ENCODE measurements at regions of chr9 and their contacts with region 1.

Region 1: GRCh38 chr9:84397151-84397728 is 56.7 kb upstream of the SLC28A3 start:
- DNase-seq: peak; percentile 49 to 67
- ATAC-seq: peak; percentile 86 to 94
- H3K4me3 ChIP-seq: no peak overlapping the region
- H3K27ac ChIP-seq: no peak overlapping the region
- H3K4me1 ChIP-seq: no peaks in the 10 kb centered on the region
- CTCF ChIP-seq: peak; percentile 86
- EP300 ChIP-seq: no peak
- POLR2A ChIP-seq: no peak
- RAD21 ChIP-seq: peak; percentile 90 to 92

Region 2: GRCh38 chr9:84424931-84425330 is 27.7 kb after region 1 on chr9:
- CTCF ChIA-PET with region 1: interaction called, 10 read pairs
- POLR2A ChIA-PET with region 1: no interaction called
- DNase-seq: no peak
- ATAC-seq: no peak
- H3K4me3 ChIP-seq: no peak overlapping the region
- H3K27ac ChIP-seq: no peak overlapping the region
- H3K4me1 ChIP-seq: no peaks in the 10 kb centered on the region
- CTCF ChIP-seq: no peak
- EP300 ChIP-seq: no peak
- POLR2A ChIP-seq: no peak
- RAD21 ChIP-seq: no peak

Region 3: GRCh38 chr9:85258823-85259370 is 861.7 kb after region 1 on chr9:
- CTCF ChIA-PET with region 1: interaction called, 28 read pairs
- POLR2A ChIA-PET with region 1: interaction called, 3 read pairs
- DNase-seq: peak; percentile 60 to 74
- ATAC-seq: peak; percentile 95 to 98
- H3K4me3 ChIP-seq: no peak overlapping the region
- H3K27ac ChIP-seq: no peak overlapping the region
- H3K4me1 ChIP-seq: no peaks in the 10 kb centered on the region
- CTCF ChIP-seq: peak; percentile 44
- EP300 ChIP-seq: no peak
- POLR2A ChIP-seq: no peak
- RAD21 ChIP-seq: peak; percentile 71 to 88

Region 4: GRCh38 chr9:85483208-85483607 is 1086.0 kb after region 1 on chr9:
- CTCF ChIA-PET with region 1: interaction called, 18 read pairs
- POLR2A ChIA-PET with region 1: no interaction called
- DNase-seq: peak in 1 of 2 experiments; percentile 32
- ATAC-seq: no peak
- H3K4me3 ChIP-seq: no peak overlapping the region
- H3K27ac ChIP-seq: no peak overlapping the region
- H3K4me1 ChIP-seq: no peaks in the 10 kb centered on the region
- CTCF ChIP-seq: no peak
- EP300 ChIP-seq: no peak
- POLR2A ChIP-seq: no peak
- RAD21 ChIP-seq: 0 out of 5 replicates have a peak, but pooled peaks of 1 of the 2 experiments have one; percentile 16

Measured in A549 (cell line).